Activated CD4-positive, alpha-beta memory T cell treated with anti-CD3 and anti-CD28 coated beads for 36 hours (primary cell): ENCODE measurements at regions of chr10 and their contacts with region 1.

Region 1: GRCh38 chr10:86399879-86400704 is 33.5 kb upstream of the GRID1 start:
- DNase-seq: peak; percentile 97
- H3K4me3 Mint-ChIP-seq: peak overlapping the region; percentile 89
- H3K27ac Mint-ChIP-seq: peak overlapping the region; percentile 87
- H3K4me1 Mint-ChIP-seq: peaks cover 10% of the 10 kb centered on the region
- H3K27me3 Mint-ChIP-seq: no peaks in the 10 kb centered on the region

Region 2: DNA sequence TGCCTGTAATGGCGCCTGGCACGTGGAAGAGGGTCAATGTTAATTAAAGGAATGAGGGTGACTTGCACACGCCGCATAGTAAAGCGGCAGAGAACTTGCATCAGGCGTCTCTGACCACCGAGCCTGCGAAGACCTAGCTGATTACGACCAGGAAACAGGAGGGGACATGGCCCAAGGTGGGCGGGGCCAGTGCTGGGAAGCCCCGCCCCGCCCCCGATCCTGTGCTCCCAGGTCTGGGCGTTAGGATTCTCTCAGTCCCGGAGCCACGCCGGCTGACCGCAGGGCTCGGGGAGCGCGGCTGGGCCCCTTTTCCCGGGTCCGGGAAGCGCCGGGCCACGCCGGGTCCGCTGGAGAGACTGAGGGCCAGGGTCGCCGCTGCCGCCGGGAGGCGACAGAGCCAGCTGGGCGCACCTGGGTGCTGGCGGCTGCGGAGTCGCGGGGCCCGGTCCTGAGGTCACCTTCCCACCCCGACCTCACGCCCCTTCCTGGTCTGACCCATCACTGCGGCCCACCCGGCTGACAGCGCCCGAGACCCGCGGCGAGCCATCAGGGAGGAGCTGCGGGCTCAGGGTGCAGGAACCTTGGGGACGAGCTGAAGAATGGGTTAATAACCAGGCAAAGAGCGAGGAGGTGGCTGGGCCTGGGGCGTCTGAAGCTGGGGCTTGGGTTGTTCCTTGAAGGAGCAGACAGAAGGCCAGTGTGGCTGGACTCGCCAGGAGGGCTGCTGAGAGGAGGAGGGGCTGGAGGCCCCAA is 10.5 kb before region 1 on chr10:
- CTCF ChIA-PET with region 1: interaction called, 22 read pairs
- POLR2A ChIA-PET with region 1: interaction called, 3 read pairs
- intact Hi-C with region 1: no loop called
- DNase-seq: peak; percentile 39
- H3K4me3 Mint-ChIP-seq: peak overlapping the region; percentile 64
- H3K27ac Mint-ChIP-seq: no peak overlapping the region
- H3K4me1 Mint-ChIP-seq: peaks cover 9% of the 10 kb centered on the region
- H3K27me3 Mint-ChIP-seq: peaks cover 27% of the 10 kb centered on the region

Region 3: GRCh38 chr10:86449926-86450558 is 50.0 kb after region 1 on chr10:
- CTCF ChIA-PET with region 1: interaction called, 5 read pairs
- POLR2A ChIA-PET with region 1: interaction called, 5 read pairs
- intact Hi-C with region 1: loop called (anchors 5 kb)
- DNase-seq: no peak
- H3K4me3 Mint-ChIP-seq: no peak overlapping the region
- H3K27ac Mint-ChIP-seq: no peak overlapping the region
- H3K4me1 Mint-ChIP-seq: peaks cover 22% of the 10 kb centered on the region
- H3K27me3 Mint-ChIP-seq: no peaks in the 10 kb centered on the region

Region 4: DNA sequence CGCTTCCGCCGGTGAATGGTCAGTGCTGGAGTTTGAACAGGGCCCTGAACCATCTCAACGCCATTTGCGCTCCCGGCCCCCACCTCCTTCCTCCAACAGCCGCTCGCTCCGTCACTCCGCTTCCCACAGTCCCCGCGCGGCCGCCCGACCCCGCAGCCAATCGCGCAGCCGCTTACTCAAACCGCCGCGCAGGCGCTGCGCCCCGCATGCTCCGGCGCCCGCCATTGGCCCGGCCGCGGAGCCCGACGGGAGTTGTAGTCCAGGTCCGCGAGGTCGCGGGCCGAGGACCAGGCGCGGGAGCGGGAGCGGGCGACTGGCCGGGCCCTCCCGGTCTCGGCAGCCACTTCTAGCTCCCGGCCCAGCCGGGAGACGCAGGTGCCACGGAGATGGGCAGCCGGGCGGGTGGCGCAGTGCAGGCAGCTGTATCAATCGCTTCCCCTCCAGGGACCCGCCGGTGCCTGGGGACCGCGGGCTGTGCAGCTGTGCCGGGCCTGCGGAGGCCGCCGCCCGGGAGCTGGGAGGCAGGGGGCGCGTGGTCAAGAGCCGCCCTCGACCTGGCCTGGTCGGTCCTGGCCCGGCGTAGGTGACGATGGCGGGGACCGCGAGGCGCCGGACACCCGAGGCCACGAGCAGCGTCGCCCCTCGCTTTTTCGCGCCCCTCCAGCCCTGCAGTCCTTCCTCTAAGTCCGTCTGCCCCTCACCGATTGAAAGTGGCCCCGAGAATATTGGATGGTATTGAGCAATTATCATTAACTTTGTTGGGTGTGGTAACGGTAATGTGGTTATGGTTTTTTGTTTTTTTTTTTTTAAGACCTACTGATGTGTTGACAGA is 121.8 kb after region 1 on chr10 and contains the start of gene WAPL:
- CTCF ChIA-PET with region 1: interaction called, 15 read pairs
- POLR2A ChIA-PET with region 1: interaction called, 13 read pairs
- intact Hi-C with region 1: loop called (anchors 1 kb)
- DNase-seq: peak; percentile 96
- H3K4me3 Mint-ChIP-seq: peak within 1 kb of the TSS; percentile 86
- H3K27ac Mint-ChIP-seq: peak within 1 kb of the TSS; percentile 86
- H3K4me1 Mint-ChIP-seq: peaks cover 58% of the 10 kb centered on the region
- H3K27me3 Mint-ChIP-seq: no peaks in the 10 kb centered on the region
- total RNA-seq, gene WAPL: 43.6 to 44.6 TPM

Region 5: GRCh38 chr10:86585037-86585725 is 185.1 kb after region 1 on chr10:
- CTCF ChIA-PET with region 1: interaction called, 110 read pairs
- POLR2A ChIA-PET with region 1: interaction called, 20 read pairs
- intact Hi-C with region 1: loop called (anchors 1 kb)
- DNase-seq: peak; percentile 82
- H3K4me3 Mint-ChIP-seq: no peak overlapping the region
- H3K27ac Mint-ChIP-seq: no peak overlapping the region
- H3K4me1 Mint-ChIP-seq: peaks cover 2% of the 10 kb centered on the region
- H3K27me3 Mint-ChIP-seq: no peaks in the 10 kb centered on the region